GM10248 (cell line): ENCODE measurements at regions of chr11 and their contacts with region 1.

Region 1: DNA sequence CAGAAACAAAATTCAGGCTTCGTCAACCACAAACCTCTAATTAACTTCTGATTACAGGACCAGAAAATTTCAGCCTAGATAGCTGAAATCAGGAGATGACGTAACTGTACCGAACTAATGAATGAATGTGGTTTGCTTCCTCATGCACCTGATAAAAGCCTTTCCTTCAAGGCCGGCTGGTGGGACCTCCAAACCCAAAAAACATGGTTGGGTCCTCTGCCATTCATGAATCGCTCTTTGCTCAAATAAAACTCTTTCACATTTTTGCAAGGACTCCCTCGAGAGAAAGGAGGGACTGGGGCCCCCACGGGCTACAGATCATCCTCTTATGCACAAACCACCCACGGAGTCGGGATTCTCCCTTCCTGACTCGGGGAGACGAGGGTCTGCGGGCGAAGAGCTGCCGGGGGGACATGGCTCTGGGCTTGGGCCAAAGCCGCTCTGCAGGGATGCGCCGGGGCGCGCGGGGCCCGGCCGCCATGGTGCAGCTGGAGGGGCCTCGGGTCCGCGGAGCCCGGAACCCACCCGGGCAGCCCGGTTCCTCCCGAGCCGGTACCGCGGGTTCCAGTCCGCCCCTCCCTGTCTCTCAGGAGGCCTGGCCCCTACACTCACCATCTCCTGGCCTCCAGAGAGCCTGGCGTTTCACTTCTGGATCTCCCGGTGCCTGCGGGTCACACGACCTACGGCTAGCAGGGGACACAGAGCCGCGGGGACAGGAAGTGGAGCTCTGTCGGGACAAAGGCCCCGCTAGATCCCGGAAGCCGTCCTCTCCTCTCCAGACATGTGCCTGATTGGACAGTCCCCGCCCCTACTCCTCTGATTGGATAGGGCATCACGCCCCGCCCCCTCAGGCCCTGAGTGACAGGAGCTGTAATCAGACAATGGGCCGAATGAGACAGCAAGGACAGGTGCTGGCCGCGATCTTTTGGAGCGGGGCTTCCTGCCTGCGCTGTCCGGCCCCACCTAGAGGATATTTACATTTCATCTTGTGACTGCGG is at the start of gene ZNF195:
- DNase-seq: peak; percentile 99
- CTCF ChIP-seq: no peak

Region 2: DNA sequence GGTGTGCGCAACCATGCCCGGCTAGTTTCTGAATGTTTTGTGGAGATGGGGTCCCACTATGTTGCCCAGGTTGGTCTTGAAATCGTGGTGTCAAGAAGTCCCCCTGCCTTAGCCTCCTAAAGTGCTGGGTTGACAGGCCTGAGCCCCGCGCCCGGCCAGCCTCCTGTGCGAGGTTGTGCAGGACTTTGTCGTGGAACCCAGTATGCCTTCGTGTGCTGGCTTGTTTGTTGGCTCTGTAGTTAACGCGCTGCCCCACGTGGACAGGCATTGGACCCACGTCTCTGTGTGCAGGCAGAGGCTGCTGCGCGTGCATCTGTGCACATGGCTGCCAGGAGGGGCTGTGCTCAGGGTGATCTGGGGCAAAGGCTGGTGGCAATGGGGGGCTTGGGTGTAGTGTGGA is 34.1 kb after region 1 on chr11:
- CTCF ChIA-PET with region 1: interaction called, 36 read pairs
- POLR2A ChIA-PET with region 1: no interaction called
- DNase-seq: no peak
- CTCF ChIP-seq: no peak